ENCODE measurements at regions of chr5 and their contacts with region 1.

Region 1: GRCh38 chr5:18281682-18282557 is 647.7 kb downstream of the TAF11L14 start:
- DNase-seq: peak in 1 of 2 experiments; percentile 6
- H3K4me3 ChIP-seq: no peak overlapping the region
- H3K4me3 Mint-ChIP-seq: no peak overlapping the region
- H3K27ac Mint-ChIP-seq: no peak overlapping the region
- H3K4me1 ChIP-seq: no peaks in the 10 kb centered on the region
- H3K4me1 Mint-ChIP-seq: no peaks in the 10 kb centered on the region
- H3K27me3 ChIP-seq: no peaks in the 10 kb centered on the region
- H3K27me3 Mint-ChIP-seq: peaks cover 3% of the 10 kb centered on the region
- CTCF ChIP-seq: peak; percentile 29 to 56

Region 2: DNA sequence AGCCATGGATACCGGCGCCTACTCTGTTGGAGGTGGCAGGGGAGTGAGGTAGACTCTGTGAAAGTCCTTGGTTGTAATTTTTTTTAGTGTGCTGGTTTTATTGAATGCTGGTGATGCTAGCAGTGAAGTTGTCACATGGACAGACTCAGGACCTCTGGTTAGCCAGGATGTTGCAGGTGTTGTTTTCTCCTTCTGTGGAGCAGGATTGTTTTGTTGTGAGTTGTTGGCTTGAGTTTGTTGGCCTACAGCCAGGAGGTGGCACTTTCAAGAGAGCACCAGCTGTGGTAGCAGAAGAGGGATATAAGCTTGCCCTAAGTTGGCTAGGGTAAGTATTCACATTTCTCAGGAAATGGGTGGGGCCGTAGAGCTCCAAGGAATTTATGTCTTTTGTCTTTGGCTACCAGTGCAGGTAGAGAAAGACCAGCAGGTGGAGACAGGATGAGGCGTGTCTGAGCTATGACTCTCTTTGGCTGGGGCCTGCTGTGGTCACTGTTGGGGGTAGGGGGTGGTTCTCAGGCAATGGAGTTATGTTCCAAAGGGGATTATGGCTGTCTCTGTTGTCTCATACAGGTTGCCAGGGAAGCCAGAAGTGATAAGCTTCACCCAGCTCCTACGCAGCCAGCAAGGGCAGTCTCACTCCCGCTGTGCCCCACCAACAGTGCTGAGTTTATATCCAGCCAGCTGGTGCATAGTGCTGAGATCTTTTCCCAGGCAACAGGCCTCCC is 399.0 kb before region 1 on chr5:
- CTCF ChIA-PET with region 1: no interaction called
- POLR2A ChIA-PET with region 1: no interaction called
- intact Hi-C with region 1: loop called (anchors 1 kb)
- DNase-seq: no peak
- H3K4me3 ChIP-seq: no peak overlapping the region
- H3K4me3 Mint-ChIP-seq: no peak overlapping the region
- H3K27ac Mint-ChIP-seq: no peak overlapping the region
- H3K4me1 ChIP-seq: no peaks in the 10 kb centered on the region
- H3K4me1 Mint-ChIP-seq: no peaks in the 10 kb centered on the region
- H3K27me3 ChIP-seq: no peaks in the 10 kb centered on the region
- H3K27me3 Mint-ChIP-seq: no peaks in the 10 kb centered on the region
- CTCF ChIP-seq: no peak

Region 3: GRCh38 chr5:18010053-18010452 is 271.9 kb before region 1 on chr5:
- CTCF ChIA-PET with region 1: no interaction called
- POLR2A ChIA-PET with region 1: no interaction called
- intact Hi-C with region 1: no loop called
- DNase-seq: no peak
- H3K4me3 ChIP-seq: no peak overlapping the region
- H3K4me3 Mint-ChIP-seq: no peak overlapping the region
- H3K27ac Mint-ChIP-seq: no peak overlapping the region
- H3K4me1 ChIP-seq: no peaks in the 10 kb centered on the region
- H3K4me1 Mint-ChIP-seq: no peaks in the 10 kb centered on the region
- H3K27me3 ChIP-seq: no peaks in the 10 kb centered on the region
- H3K27me3 Mint-ChIP-seq: no peaks in the 10 kb centered on the region
- CTCF ChIP-seq: peak in 1 of 2 experiments; percentile 19

Region 4: GRCh38 chr5:18105449-18105848 is 176.5 kb before region 1 on chr5:
- CTCF ChIA-PET with region 1: no interaction called
- POLR2A ChIA-PET with region 1: no interaction called
- intact Hi-C with region 1: loop called (anchors 5 kb)
- DNase-seq: no peak
- H3K4me3 ChIP-seq: no peak overlapping the region
- H3K4me3 Mint-ChIP-seq: no peak overlapping the region
- H3K27ac Mint-ChIP-seq: no peak overlapping the region
- H3K4me1 ChIP-seq: no peaks in the 10 kb centered on the region
- H3K4me1 Mint-ChIP-seq: no peaks in the 10 kb centered on the region
- H3K27me3 ChIP-seq: no peaks in the 10 kb centered on the region
- H3K27me3 Mint-ChIP-seq: no peaks in the 10 kb centered on the region
- CTCF ChIP-seq: no peak

Region 5: GRCh38 chr5:18244309-18244708 is 37.6 kb before region 1 on chr5:
- CTCF ChIA-PET with region 1: no interaction called
- POLR2A ChIA-PET with region 1: no interaction called
- intact Hi-C with region 1: no loop called
- DNase-seq: no peak
- H3K4me3 ChIP-seq: no peak overlapping the region
- H3K4me3 Mint-ChIP-seq: no peak overlapping the region
- H3K27ac Mint-ChIP-seq: no peak overlapping the region
- H3K4me1 ChIP-seq: no peaks in the 10 kb centered on the region
- H3K4me1 Mint-ChIP-seq: no peaks in the 10 kb centered on the region
- H3K27me3 ChIP-seq: no peaks in the 10 kb centered on the region
- H3K27me3 Mint-ChIP-seq: no peaks in the 10 kb centered on the region
- CTCF ChIP-seq: no peak

Region 6: GRCh38 chr5:18305297-18305924 is 23.5 kb after region 1 on chr5:
- CTCF ChIA-PET with region 1: interaction called, 3 read pairs
- POLR2A ChIA-PET with region 1: no interaction called
- intact Hi-C with region 1: loop called (anchors 1 kb)
- DNase-seq: peak in 1 of 2 experiments; percentile 43
- H3K4me3 ChIP-seq: no peak overlapping the region
- H3K4me3 Mint-ChIP-seq: no peak overlapping the region
- H3K27ac Mint-ChIP-seq: no peak overlapping the region
- H3K4me1 ChIP-seq: no peaks in the 10 kb centered on the region
- H3K4me1 Mint-ChIP-seq: no peaks in the 10 kb centered on the region
- H3K27me3 ChIP-seq: no peaks in the 10 kb centered on the region
- H3K27me3 Mint-ChIP-seq: peaks cover 4% of the 10 kb centered on the region
- CTCF ChIP-seq: peak; percentile 65 to 67

Region 7: DNA sequence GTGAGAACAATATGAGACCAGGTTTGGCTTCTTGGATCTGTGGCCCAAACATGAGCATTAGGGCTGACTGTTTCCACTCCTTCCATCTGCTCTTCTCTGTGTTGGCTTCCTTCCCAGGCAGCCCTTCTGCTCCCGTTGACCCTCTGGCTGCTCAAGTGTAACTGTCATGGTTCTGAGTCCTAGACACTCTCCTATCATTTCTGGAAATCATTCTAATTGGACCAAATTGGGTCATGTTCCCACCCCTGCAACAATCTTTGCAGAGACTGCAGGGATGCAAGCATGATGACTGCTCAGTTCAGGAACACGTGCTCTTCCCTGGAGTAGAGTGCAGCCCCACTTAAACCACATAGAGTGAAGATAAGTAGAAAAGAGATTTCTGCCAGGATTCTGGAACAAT is 93.7 kb after region 1 on chr5:
- CTCF ChIA-PET with region 1: no interaction called
- POLR2A ChIA-PET with region 1: no interaction called
- intact Hi-C with region 1: no loop called
- DNase-seq: no peak
- H3K4me3 ChIP-seq: no peak overlapping the region
- H3K4me3 Mint-ChIP-seq: no peak overlapping the region
- H3K27ac Mint-ChIP-seq: no peak overlapping the region
- H3K4me1 ChIP-seq: no peaks in the 10 kb centered on the region
- H3K4me1 Mint-ChIP-seq: no peaks in the 10 kb centered on the region
- H3K27me3 ChIP-seq: no peaks in the 10 kb centered on the region
- H3K27me3 Mint-ChIP-seq: peaks cover 6% of the 10 kb centered on the region
- CTCF ChIP-seq: no peak